MCF 10A (cell line): ENCODE measurements at regions of chr18 and their contacts with region 1.

Region 1: DNA sequence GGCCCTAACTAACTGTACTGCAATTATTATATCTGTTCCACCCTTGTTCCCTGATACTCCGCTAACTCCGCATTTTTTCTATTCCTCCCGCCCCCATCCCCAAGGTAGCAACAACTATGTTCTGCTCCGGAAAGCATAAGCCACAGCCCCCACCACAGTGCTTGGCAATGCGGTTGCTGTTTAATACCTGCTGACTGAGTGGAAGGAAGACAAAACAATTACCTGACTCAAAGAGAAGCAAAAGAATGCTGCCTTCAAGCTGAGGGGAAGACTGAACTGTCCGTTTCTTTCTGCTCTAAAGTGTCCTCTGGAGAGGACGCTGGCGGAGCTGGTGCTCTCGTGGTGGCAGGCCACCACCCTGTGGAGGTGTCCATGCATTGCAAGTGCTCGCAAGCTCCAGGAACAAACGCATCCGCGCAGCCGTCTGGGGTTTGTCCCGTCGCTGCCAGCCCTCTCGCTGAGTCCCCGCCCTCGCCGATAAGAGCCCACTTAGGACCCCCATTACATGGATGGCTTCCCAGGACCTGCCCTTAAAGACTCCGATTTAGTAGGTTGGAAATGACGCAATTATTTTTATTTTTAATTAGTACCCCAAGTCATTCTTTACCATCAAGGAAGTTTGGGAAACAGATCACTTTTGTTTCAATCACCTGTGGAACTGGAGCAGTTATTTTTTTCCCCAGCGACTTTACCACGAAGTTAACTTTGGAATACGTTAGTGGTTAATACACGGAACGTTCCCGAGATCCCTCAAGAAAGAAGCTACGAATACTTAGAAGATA is 1.6 kb upstream of the MYL12A start:
- DNase-seq: peak; percentile 89
- H3K4me3 Mint-ChIP-seq: peak overlapping the region; percentile 86
- H3K27ac Mint-ChIP-seq: peak overlapping the region; percentile 100
- H3K4me1 Mint-ChIP-seq: peaks cover 22% of the 10 kb centered on the region
- H3K27me3 Mint-ChIP-seq: no peaks in the 10 kb centered on the region
- CTCF ChIP-seq: peak; percentile 97

Region 2: GRCh38 chr18:2571200-2572143 is 674.6 kb before region 1 on chr18 and contains the starts of genes METTL4 and NDC80:
- CTCF ChIA-PET with region 1: no interaction called
- POLR2A ChIA-PET with region 1: interaction called, 13 read pairs
- intact Hi-C with region 1: no loop called
- DNase-seq: peak; percentile 89
- H3K4me3 Mint-ChIP-seq: peak within 1 kb of the TSS; percentile 98
- H3K27ac Mint-ChIP-seq: peak within 1 kb of the TSS; percentile 99
- H3K4me1 Mint-ChIP-seq: peaks cover 45% of the 10 kb centered on the region
- H3K27me3 Mint-ChIP-seq: no peaks in the 10 kb centered on the region
- CTCF ChIP-seq: no peak
- total RNA-seq, gene METTL4: 11.8 and 15.0 TPM in 2 replicates
- total RNA-seq, gene NDC80: 20.4 and 29.6 TPM in 2 replicates

Region 3: GRCh38 chr18:2948038-2948437 is 298.0 kb before region 1 on chr18:
- CTCF ChIA-PET with region 1: interaction called, 71 read pairs
- POLR2A ChIA-PET with region 1: interaction called, 46 read pairs
- intact Hi-C with region 1: loop called (anchors 5 kb)
- DNase-seq: peak; percentile 48
- H3K4me3 Mint-ChIP-seq: no peak overlapping the region
- H3K27ac Mint-ChIP-seq: no peak overlapping the region
- H3K4me1 Mint-ChIP-seq: no peaks in the 10 kb centered on the region
- H3K27me3 Mint-ChIP-seq: no peaks in the 10 kb centered on the region
- CTCF ChIP-seq: peak; percentile 35

Region 4: GRCh38 chr18:3062798-3063680 is 183.0 kb before region 1 on chr18:
- CTCF ChIA-PET with region 1: interaction called, 3 read pairs
- POLR2A ChIA-PET with region 1: interaction called, 5 read pairs
- intact Hi-C with region 1: loop called (anchors 2 kb)
- DNase-seq: peak; percentile 64
- H3K4me3 Mint-ChIP-seq: no peak overlapping the region
- H3K27ac Mint-ChIP-seq: no peak overlapping the region
- H3K4me1 Mint-ChIP-seq: peaks cover 6% of the 10 kb centered on the region
- H3K27me3 Mint-ChIP-seq: no peaks in the 10 kb centered on the region
- CTCF ChIP-seq: peak; percentile 59

Region 5: GRCh38 chr18:3219631-3220335 is 26.3 kb before region 1 on chr18 and contains the start of gene MYOM1:
- CTCF ChIA-PET with region 1: interaction called, 11 read pairs
- POLR2A ChIA-PET with region 1: interaction called, 3 read pairs
- intact Hi-C with region 1: no loop called
- DNase-seq: no peak
- H3K4me3 Mint-ChIP-seq: no peak within 1 kb of the TSS
- H3K27ac Mint-ChIP-seq: peak within 1 kb of the TSS; percentile 28
- H3K4me1 Mint-ChIP-seq: peaks cover 7% of the 10 kb centered on the region
- H3K27me3 Mint-ChIP-seq: no peaks in the 10 kb centered on the region
- CTCF ChIP-seq: no peak
- total RNA-seq, gene MYOM1: 0.21 and 0.88 TPM in 2 replicates

Region 6: GRCh38 chr18:3593904-3594661 is 348.0 kb after region 1 on chr18:
- CTCF ChIA-PET with region 1: interaction called, 4 read pairs
- POLR2A ChIA-PET with region 1: interaction called, 18 read pairs
- intact Hi-C with region 1: no loop called
- DNase-seq: peak; percentile 96
- H3K4me3 Mint-ChIP-seq: peak overlapping the region; percentile 82
- H3K27ac Mint-ChIP-seq: peak overlapping the region; percentile 98
- H3K4me1 Mint-ChIP-seq: peaks cover 40% of the 10 kb centered on the region
- H3K27me3 Mint-ChIP-seq: no peaks in the 10 kb centered on the region
- CTCF ChIP-seq: peak; percentile 80